ENCODE measurements at regions of chr17 and their contacts with region 1.

Region 1: DNA sequence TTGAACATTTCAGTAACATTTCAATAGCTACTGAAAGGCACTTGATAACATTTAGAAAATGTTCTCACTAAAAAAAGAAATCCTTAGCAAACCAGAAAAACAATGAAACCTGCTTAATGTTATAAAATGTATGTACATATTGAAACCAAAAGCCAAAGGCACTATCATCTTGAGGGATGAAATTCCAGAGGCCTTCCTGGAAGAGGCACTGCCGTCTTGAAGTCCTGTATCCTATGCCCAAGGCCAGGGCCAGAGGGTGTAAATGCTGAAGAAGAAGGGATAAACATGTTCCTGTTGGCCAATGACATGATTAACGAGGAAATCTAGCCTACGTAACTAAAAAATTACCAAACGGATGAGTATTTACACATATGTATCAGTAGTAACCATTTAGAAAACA is 57.0 kb upstream of the DNAH17 start:
- DNase-seq: no peak
- H3K4me3 ChIP-seq: no peak overlapping the region
- CTCF ChIP-seq: no peak

Region 2: GRCh38 chr17:78532922-78533640 is 101.1 kb before region 1 on chr17:
- in situ Hi-C with region 1: loop called (anchors 5 kb)
- DNase-seq: peak; percentile 38
- H3K4me3 ChIP-seq: no peak overlapping the region
- CTCF ChIP-seq: no peak

Region 3: DNA sequence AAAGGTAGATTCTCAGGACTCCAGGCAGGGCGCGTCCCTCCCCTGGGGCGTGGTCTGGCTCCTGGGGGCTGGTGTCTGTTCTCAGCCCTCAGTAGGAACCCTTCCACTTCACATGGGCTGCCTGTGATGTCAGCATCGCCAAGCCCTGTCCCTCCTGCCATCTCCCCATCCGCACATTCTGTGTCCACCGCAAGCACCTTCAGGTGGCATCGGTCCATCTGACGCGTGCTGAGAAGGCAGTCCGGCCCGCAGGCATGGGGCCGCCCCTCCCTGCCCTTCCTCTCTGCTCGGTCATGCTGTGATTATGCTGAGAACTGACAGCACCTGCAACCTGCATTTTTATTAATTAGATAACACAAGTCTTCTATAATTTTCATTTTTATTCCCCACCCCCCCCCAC is 44.3 kb before region 1 on chr17:
- in situ Hi-C with region 1: loop called (anchors 5 kb)
- DNase-seq: no peak
- H3K4me3 ChIP-seq: no peak overlapping the region
- CTCF ChIP-seq: no peak